B cell (primary cell): ENCODE measurements at regions of chr7 and their contacts with region 1.

Region 1: GRCh38 chr7:104923010-104923421 is 91.0 kb upstream of the KMT2E start:
- DNase-seq: peak; percentile 88
- ATAC-seq: peak; percentile 99
- H3K4me3 ChIP-seq: no peak overlapping the region
- H3K4me3 Mint-ChIP-seq: no peak overlapping the region
- H3K27ac ChIP-seq: peak overlapping the region; percentile 20 to 56
- H3K27ac Mint-ChIP-seq: peak overlapping the region; percentile 82
- H3K4me1 ChIP-seq: peaks cover 6 to 8% of the 10 kb centered on the region in 2 donors
- H3K4me1 Mint-ChIP-seq: peaks cover 7% of the 10 kb centered on the region
- H3K27me3 ChIP-seq: no peaks in the 10 kb centered on the region
- H3K27me3 Mint-ChIP-seq: no peaks in the 10 kb centered on the region
- CTCF ChIP-seq: peak; percentile 89

Region 2: GRCh38 chr7:104231054-104232046 is 691.7 kb before region 1 on chr7:
- CTCF ChIA-PET with region 1: interaction called, 24 read pairs
- POLR2A ChIA-PET with region 1: no interaction called
- intact Hi-C with region 1: no loop called
- DNase-seq: peak; percentile 57
- ATAC-seq: peak; percentile 64
- H3K4me3 ChIP-seq: no peak overlapping the region
- H3K4me3 Mint-ChIP-seq: no peak overlapping the region
- H3K27ac ChIP-seq: no peak overlapping the region
- H3K27ac Mint-ChIP-seq: no peak overlapping the region
- H3K4me1 ChIP-seq: no peaks in the 10 kb centered on the region
- H3K4me1 Mint-ChIP-seq: peaks cover 1% of the 10 kb centered on the region
- H3K27me3 ChIP-seq: peaks cover 0 to 18% (median 5%) of the 10 kb centered on the region in 4 experiments
- H3K27me3 Mint-ChIP-seq: peaks cover 28% of the 10 kb centered on the region
- CTCF ChIP-seq: peak; percentile 85

Region 3: DNA sequence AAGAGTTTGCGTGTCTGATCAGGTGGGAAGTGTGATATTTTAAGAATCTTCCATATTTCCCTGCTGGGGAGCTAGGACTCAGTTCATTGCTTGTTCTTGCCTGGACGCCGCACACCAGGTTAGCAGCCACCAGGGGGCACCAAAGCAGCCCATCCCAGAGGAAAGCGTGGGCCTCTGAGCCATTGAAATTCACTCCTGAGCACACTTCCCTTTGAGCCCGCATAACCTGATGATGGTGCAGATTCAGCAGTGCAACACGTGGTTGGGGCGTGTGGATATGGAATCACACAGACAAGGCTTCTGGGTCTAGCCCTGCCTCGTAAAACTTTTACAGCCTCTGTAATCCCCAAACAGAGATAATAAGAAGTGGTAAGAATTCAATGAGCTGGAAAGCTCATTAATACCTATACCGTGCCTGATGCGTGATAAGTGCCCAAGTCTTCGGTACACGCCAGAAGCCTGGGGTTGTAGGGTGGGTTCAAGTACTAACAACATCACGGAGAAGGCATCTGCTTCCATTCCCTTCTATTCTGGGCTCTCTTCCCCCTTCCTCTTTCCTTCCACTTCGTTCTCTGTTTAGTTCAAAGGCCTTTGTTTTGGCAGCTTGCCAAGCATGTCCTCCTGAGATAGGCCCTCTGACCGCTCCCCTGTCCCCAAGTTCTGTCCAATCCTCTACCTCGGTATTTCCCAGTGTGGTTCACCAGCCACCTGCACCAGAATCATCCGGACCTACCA is 39.1 kb before region 1 on chr7:
- CTCF ChIA-PET with region 1: interaction called, 293 read pairs
- POLR2A ChIA-PET with region 1: no interaction called
- intact Hi-C with region 1: loop called (anchors 1 kb)
- DNase-seq: peak; percentile 78
- ATAC-seq: peak; percentile 81
- H3K4me3 ChIP-seq: no peak overlapping the region
- H3K4me3 Mint-ChIP-seq: no peak overlapping the region
- H3K27ac ChIP-seq: no peak overlapping the region
- H3K27ac Mint-ChIP-seq: no peak overlapping the region
- H3K4me1 ChIP-seq: peaks cover 4 to 6% of the 10 kb centered on the region in 2 donors
- H3K4me1 Mint-ChIP-seq: peaks cover 8% of the 10 kb centered on the region
- H3K27me3 ChIP-seq: peaks cover 0 to 9% (median 2%) of the 10 kb centered on the region in 4 experiments
- H3K27me3 Mint-ChIP-seq: peaks cover 12% of the 10 kb centered on the region
- CTCF ChIP-seq: peak; percentile 95

Region 4: GRCh38 chr7:104956753-104957450 is 33.9 kb after region 1 on chr7:
- CTCF ChIA-PET with region 1: interaction called, 4 read pairs
- POLR2A ChIA-PET with region 1: no interaction called
- intact Hi-C with region 1: loop called (anchors 5 kb)
- DNase-seq: no peak
- ATAC-seq: no peak
- H3K4me3 ChIP-seq: no peak overlapping the region
- H3K4me3 Mint-ChIP-seq: peak overlapping the region; percentile 18
- H3K27ac ChIP-seq: peak overlapping the region; percentile 33 to 71
- H3K27ac Mint-ChIP-seq: peak overlapping the region; percentile 70
- H3K4me1 ChIP-seq: peaks cover 26 to 27% of the 10 kb centered on the region in 2 donors
- H3K4me1 Mint-ChIP-seq: peaks cover 44% of the 10 kb centered on the region
- H3K27me3 ChIP-seq: no peaks in the 10 kb centered on the region
- H3K27me3 Mint-ChIP-seq: no peaks in the 10 kb centered on the region
- CTCF ChIP-seq: no peak

Region 5: DNA sequence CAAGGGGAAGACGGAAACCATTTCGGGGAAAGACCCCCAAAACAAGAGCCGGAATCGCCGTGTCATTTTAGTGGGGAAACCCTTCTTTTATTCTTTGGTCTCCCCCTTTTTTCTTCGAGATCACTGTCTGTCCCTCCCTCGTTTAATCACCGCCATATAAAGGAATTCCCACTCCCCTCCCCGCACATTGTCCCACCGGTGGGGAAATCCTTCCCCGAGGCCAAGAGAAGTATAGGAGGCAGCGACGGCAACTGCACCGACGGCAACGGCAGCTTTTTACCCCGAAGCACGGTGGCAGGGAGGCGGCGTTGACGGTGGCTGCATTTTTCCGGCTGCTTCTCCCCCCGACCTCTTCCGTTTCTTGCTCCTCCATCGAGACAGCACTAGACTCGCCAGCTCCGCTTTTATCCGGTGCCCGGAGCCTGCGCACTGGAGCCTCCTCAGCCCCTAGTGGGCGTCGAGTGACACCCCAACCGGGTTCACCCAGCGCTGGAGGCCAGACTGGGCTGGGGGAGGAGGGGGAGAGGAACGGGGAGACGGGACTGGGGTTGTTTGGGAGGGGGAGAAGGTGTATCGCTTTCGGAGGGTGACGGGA is 90.3 kb after region 1 on chr7:
- CTCF ChIA-PET with region 1: interaction called, 11 read pairs
- POLR2A ChIA-PET with region 1: interaction called, 10 read pairs
- intact Hi-C with region 1: loop called (anchors 1 kb)
- DNase-seq: peak; percentile 95
- ATAC-seq: peak; percentile 57
- H3K4me3 ChIP-seq: peak overlapping the region; percentile 95 to 99 (median 97)
- H3K4me3 Mint-ChIP-seq: peak overlapping the region; percentile 99
- H3K27ac ChIP-seq: peak overlapping the region; percentile 100
- H3K27ac Mint-ChIP-seq: peak overlapping the region; percentile 100
- H3K4me1 ChIP-seq: peaks cover 33 to 52% of the 10 kb centered on the region in 2 donors
- H3K4me1 Mint-ChIP-seq: peaks cover 56% of the 10 kb centered on the region
- H3K27me3 ChIP-seq: no peaks in the 10 kb centered on the region
- H3K27me3 Mint-ChIP-seq: no peaks in the 10 kb centered on the region
- CTCF ChIP-seq: peak; percentile 59

Region 6: GRCh38 chr7:105046414-105046813 is 123.4 kb after region 1 on chr7:
- CTCF ChIA-PET with region 1: interaction called, 42 read pairs
- POLR2A ChIA-PET with region 1: no interaction called
- intact Hi-C with region 1: loop called (anchors 1 kb)
- DNase-seq: no peak
- ATAC-seq: no peak
- H3K4me3 ChIP-seq: no peak overlapping the region
- H3K4me3 Mint-ChIP-seq: no peak overlapping the region
- H3K27ac ChIP-seq: no peak overlapping the region
- H3K27ac Mint-ChIP-seq: no peak overlapping the region
- H3K4me1 ChIP-seq: peaks cover 5 to 6% of the 10 kb centered on the region in 2 donors
- H3K4me1 Mint-ChIP-seq: peaks cover 26% of the 10 kb centered on the region
- H3K27me3 ChIP-seq: no peaks in the 10 kb centered on the region
- H3K27me3 Mint-ChIP-seq: no peaks in the 10 kb centered on the region
- CTCF ChIP-seq: no peak

Region 7: DNA sequence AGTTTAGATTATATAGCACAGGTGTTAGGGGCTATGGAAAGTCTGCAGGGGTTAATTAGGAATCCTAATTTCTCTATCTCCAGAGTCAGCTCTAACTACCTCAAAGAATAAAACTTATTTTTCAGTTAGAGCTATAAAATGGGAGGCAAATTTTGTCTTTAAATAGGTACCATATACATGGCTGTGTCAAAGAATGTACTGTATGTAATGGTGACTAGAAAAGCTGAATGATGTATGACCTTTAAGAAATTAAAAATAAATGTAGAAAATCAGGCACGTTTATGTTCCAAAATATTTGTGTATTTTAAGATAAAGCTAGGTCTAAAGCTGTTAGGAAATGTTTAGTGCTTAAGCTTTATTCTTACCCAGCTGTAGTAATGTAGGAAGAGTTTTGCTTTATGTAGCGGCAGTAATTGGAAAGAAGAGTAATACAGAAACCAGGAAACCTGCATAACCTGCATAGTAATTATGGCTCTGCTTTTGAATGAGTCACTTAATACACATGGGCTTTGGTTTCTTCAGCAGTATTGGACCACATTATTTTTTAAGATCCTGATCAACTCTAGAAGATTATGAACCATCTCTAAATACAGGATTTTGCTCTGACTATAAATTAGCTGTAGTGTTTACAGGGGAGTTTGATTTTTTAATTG is 176.0 kb after region 1 on chr7:
- CTCF ChIA-PET with region 1: no interaction called
- POLR2A ChIA-PET with region 1: no interaction called
- intact Hi-C with region 1: no loop called
- DNase-seq: no peak
- ATAC-seq: no peak
- H3K4me3 ChIP-seq: no peak overlapping the region
- H3K4me3 Mint-ChIP-seq: no peak overlapping the region
- H3K27ac ChIP-seq: peak overlapping the region in 1 of 2 donors; percentile 62
- H3K27ac Mint-ChIP-seq: no peak overlapping the region
- H3K4me1 ChIP-seq: no peaks in the 10 kb centered on the region
- H3K4me1 Mint-ChIP-seq: peaks cover 17% of the 10 kb centered on the region
- H3K27me3 ChIP-seq: no peaks in the 10 kb centered on the region
- H3K27me3 Mint-ChIP-seq: no peaks in the 10 kb centered on the region
- CTCF ChIP-seq: no peak

Region 8: DNA sequence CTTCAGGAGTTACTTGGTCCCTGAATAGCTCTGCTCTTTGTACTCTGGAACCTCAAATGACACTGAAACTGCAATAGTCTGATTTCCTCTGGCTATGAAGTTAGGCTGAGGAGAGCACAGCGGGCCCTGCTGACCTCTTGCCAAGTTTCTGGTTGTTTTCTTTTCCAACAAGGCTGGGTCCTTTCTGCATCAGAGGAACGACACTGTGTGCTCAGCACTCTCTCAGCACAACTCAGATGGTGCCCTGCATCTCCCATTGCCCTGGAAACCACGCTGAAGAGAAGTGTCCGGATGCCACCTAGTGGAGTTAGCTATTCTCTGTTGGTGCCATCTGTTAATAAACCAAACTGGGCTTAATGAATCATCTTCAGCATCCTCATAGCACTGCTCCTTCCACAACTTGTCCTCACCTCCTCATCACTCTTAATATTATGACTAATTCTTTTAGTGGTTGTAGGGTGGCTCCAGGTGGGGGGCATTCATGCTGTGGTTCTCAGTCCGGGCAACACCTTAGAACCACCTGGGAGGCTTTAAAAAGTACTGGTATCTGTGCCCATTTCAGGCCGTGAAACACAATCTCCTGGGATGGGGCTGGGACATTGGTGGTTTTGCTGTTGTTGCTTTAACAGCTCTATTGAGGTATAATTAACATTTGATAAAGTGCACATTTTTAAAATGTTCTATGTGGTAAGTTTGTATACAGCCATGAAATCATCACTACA is 666.5 kb after region 1 on chr7:
- CTCF ChIA-PET with region 1: no interaction called
- POLR2A ChIA-PET with region 1: no interaction called
- intact Hi-C with region 1: loop called (anchors 1 kb)
- DNase-seq: peak; percentile 66
- ATAC-seq: peak; percentile 90
- H3K4me3 ChIP-seq: no peak overlapping the region
- H3K4me3 Mint-ChIP-seq: no peak overlapping the region
- H3K27ac ChIP-seq: no peak overlapping the region
- H3K27ac Mint-ChIP-seq: peak overlapping the region; percentile 39
- H3K4me1 ChIP-seq: peaks cover 9 to 16% of the 10 kb centered on the region in 2 donors
- H3K4me1 Mint-ChIP-seq: peaks cover 30% of the 10 kb centered on the region
- H3K27me3 ChIP-seq: no peaks in the 10 kb centered on the region
- H3K27me3 Mint-ChIP-seq: no peaks in the 10 kb centered on the region
- CTCF ChIP-seq: peak; percentile 65